OCI-LY7 (cell line): ENCODE measurements at regions of chr2 and their contacts with region 1.

Region 1: DNA sequence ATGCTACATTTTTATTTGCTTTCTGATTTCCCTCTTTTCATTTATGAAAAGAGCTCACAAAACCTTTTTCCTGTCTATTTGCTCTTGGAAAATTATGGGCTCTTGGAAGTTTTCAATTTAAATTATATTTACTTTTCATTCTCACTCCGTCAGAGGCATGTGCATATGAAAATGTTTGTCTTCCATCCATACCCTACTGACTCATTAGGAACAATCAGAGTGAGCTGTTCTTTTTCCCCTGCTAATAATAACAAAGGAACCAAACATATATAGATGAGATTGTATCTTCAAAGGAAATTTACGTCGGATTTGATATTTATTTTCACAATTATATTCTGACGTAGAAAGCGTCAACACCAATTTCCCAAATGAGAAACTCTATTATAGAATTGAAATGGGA is 1101.2 kb downstream of the TSN start:
- DNase-seq: no peak
- H3K4me3 ChIP-seq: no peak overlapping the region
- H3K27ac ChIP-seq: no peak overlapping the region
- H3K4me1 ChIP-seq: no peaks in the 10 kb centered on the region
- CTCF ChIP-seq: no peak

Region 2: GRCh38 chr2:122873951-122874350 is 17.3 kb after region 1 on chr2:
- CTCF ChIA-PET with region 1: no interaction called
- POLR2A ChIA-PET with region 1: no interaction called
- intact Hi-C with region 1: loop called (anchors 1 kb)
- DNase-seq: no peak
- H3K4me3 ChIP-seq: no peak overlapping the region
- H3K27ac ChIP-seq: no peak overlapping the region
- H3K4me1 ChIP-seq: no peaks in the 10 kb centered on the region
- CTCF ChIP-seq: no peak